Dorsolateral prefrontal cortex (tissue), 120 donors: ENCODE measurements at regions of chr7 and their contacts with region 1.

Region 1: DNA sequence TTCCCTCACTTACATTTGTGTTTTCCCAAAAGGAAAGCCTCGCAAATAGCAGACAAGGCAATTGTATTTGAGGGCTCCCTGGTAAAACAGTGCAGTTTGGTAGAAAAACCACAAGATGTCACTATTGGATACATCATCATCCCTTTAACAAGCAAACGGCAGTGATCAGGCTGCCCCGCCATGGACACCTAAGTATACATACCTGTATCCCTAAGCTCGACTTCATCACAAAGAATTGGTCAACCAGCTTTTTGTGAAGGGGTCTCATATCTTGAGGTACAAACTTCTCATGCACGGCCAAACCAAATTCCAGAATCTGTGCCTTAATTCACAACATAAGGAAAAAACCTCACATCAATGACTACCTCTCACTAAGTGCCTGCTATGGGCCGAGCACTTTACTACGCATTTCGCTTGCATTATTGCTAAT is 179.5 kb upstream of the IMMP2L start:
- DNase-seq: peak in 7 of 10 donors; percentile 46 to 81 (median 68)
- H3K4me3 ChIP-seq: no peak overlapping the region
- H3K27ac ChIP-seq: peak overlapping the region in 48 of 59 donors; percentile 1 to 79 (median 52)
- H3K27me3 ChIP-seq: no peaks in the 10 kb centered on the region
- CTCF ChIP-seq: peak; percentile 42 to 87 (median 78)

Region 2: DNA sequence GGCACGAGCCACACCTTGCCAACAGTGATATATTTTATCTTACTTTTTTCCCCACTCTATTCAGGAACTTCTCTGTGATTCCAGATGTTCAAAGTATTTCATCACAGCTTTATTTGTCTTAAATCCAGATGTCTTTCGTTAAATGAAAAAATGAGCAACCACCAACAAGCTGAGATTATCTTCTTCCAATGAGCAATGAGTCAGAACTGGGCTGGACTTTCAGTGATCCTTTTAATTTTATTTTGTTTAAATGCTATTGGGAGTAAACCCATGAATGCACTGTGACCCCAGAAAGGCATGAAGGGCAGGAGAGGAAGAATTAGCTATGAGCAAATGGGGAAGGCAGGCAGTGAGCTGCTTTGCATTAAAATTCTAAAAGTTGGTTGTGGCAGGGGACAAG is 101.9 kb before region 1 on chr7:
- intact Hi-C with region 1: no loop called
- DNase-seq: no peak
- H3K4me3 ChIP-seq: no peak overlapping the region
- H3K27ac ChIP-seq: no peak overlapping the region
- H3K27me3 ChIP-seq: no peaks in the 10 kb centered on the region
- CTCF ChIP-seq: no peak

Region 3: GRCh38 chr7:111730476-111731300 is 11.1 kb before region 1 on chr7:
- intact Hi-C with region 1: no loop called
- DNase-seq: no peak
- H3K4me3 ChIP-seq: no peak overlapping the region
- H3K27ac ChIP-seq: peak overlapping the region in 3 of 59 donors; percentile 2 to 46 (median 39)
- H3K27me3 ChIP-seq: no peaks in the 10 kb centered on the region
- CTCF ChIP-seq: peak in 49 of 56 donors; percentile 19 to 57 (median 40)

Region 4: DNA sequence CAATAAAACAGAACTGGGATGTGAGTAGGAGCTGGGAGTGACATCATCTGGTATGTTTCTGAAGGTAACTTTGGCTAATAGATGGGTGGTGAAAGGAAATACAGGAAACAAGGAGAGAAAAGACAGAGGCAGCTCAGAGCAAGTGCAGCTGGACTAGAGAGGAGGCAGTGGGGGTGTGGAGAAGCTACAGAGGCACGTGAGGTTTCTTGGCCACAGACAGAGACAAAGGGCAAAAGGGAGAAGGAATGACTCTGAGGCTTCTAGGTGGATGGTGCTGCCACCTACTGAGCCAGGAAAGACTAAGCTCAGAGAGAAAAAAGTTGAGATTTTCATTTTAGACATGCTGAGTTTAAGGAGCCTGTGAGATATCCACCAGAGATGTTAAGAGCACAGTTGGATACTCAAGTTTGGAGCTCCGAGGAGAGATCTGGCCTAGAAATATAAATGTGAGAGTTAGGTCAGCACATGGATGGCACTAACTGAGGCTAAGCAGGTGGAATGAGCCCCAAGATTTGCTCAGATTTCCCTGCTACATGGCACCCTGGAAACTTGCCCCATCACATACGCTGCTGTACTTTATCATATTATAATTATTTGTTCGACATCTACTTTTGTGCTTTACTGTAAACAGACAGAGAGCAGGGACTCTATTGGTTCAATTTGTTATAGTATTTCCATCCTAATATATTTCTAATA is 113.5 kb after region 1 on chr7:
- intact Hi-C with region 1: loop called in 1 of 2 experiments (anchors 2 kb)
- DNase-seq: peak in 8 of 10 donors; percentile 36 to 70 (median 48)
- H3K4me3 ChIP-seq: no peak overlapping the region
- H3K27ac ChIP-seq: peak overlapping the region in 54 of 59 donors; percentile 1 to 83 (median 58)
- H3K27me3 ChIP-seq: no peaks in the 10 kb centered on the region
- CTCF ChIP-seq: peak; percentile 17 to 72 (median 56)

Region 5: GRCh38 chr7:111953611-111954010 is 211.8 kb after region 1 on chr7:
- intact Hi-C with region 1: loop called in 1 of 2 experiments (anchors 10 kb)
- DNase-seq: peak in 1 of 10 donors; percentile 26
- H3K4me3 ChIP-seq: no peak overlapping the region
- H3K27ac ChIP-seq: peak overlapping the region in 58 of 59 donors; percentile 3 to 87 (median 70)
- H3K27me3 ChIP-seq: no peaks in the 10 kb centered on the region
- CTCF ChIP-seq: peak in 48 of 56 donors; percentile 10 to 66 (median 38)

Region 6: DNA sequence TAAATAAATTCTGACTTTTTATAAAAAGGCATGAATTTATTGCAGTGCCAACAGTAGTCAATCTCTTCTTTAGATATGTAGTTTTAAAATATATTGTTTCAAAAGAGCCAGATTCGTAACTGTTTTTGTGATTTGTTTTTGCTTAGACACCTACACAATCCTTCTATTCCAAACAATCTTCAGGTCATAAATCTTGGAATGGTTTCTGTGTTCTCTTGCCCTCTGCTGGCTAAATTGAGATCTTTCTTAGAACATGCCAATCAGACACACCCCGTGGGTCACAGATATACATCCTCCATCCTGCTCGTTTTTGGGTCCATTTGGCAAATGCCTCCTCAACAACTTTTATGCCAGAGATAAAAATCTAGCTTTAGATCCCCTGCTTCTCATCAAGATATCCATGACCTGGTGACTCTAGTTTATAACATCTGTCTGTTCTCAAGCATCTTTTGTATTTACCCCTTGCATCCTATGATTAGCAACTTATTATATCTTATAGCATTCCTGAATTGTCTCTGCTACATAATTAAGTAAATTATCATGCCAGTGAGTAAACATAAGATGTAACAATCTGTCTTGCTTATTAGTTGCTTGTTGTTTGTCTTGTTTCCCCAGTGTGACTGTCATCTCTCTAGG is 673.1 kb after region 1 on chr7:
- intact Hi-C with region 1: loop called (anchors 5 to 10 kb)
- DNase-seq: no peak
- H3K4me3 ChIP-seq: no peak overlapping the region
- H3K27ac ChIP-seq: no peak overlapping the region
- H3K27me3 ChIP-seq: no peaks in the 10 kb centered on the region
- CTCF ChIP-seq: peak; percentile 27 to 76 (median 60)

Region 7: GRCh38 chr7:112449902-112450806 is 708.3 kb after region 1 on chr7 and contains the start of gene IFRD1:
- intact Hi-C with region 1: loop called in 1 of 2 experiments (anchors 10 kb)
- DNase-seq: peak; percentile 99 to 100 (median 100)
- H3K4me3 ChIP-seq: peak within 1 kb of the TSS; percentile 64 to 100 (median 97)
- H3K27ac ChIP-seq: peak within 1 kb of the TSS; percentile 54 to 99 (median 96)
- H3K27me3 ChIP-seq: no peaks in the 10 kb centered on the region
- CTCF ChIP-seq: peak in 19 of 56 donors; percentile 5 to 39 (median 16)
- total RNA-seq, gene IFRD1: 39.0 to 110 (median 58.1) TPM

Region 8: DNA sequence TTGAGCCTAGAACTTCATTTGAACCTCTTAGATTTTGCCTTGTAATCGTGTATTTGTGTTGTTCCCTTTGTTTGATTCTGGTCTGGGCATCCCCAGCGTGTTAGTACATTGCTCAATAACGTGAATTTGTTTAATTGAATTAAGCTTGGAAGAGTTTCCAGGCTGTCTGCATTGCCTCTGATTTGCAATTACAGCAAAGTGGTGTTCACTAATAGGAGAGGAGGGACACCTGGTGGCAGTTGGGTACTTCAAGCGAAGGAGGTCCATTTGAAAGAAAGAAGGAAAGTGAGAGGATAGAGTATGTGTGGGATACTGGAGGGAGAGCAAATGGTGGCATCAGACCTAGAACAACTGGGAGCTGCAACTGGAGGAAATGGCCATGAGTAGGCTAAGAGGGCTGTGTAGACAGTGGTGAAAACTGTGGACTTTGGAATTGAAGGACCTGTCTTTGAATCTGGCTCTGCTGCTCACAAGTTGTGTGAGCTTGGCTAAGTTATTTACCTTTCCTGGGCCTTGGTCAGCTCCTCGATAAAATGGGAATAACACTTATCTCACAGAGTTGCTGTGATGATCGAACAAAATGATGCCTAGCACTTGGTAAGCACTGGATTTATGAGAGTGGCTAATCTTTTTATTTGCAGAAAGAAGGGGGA is 754.1 kb after region 1 on chr7:
- intact Hi-C with region 1: loop called in 1 of 2 experiments (anchors 5 kb)
- DNase-seq: peak in 4 of 10 donors; percentile 21 to 74 (median 53)
- H3K4me3 ChIP-seq: no peak overlapping the region
- H3K27ac ChIP-seq: peak overlapping the region in 1 of 59 donors; percentile 0
- H3K27me3 ChIP-seq: no peaks in the 10 kb centered on the region
- CTCF ChIP-seq: peak in 54 of 56 donors; percentile 35 to 75 (median 62)